GM23248 (cell line): ENCODE measurements at regions of chr7 and their contacts with region 1.

Region 1: GRCh38 chr7:139482662-139483469 is 607 bp downstream of the KLRG2 start:
- DNase-seq: peak; percentile 57
- H3K4me3 ChIP-seq: peak overlapping the region; percentile 51
- H3K27ac ChIP-seq: no peak overlapping the region
- H3K4me1 ChIP-seq: peaks cover 11% of the 10 kb centered on the region
- H3K27me3 ChIP-seq: peaks cover 49% of the 10 kb centered on the region

Region 2: DNA sequence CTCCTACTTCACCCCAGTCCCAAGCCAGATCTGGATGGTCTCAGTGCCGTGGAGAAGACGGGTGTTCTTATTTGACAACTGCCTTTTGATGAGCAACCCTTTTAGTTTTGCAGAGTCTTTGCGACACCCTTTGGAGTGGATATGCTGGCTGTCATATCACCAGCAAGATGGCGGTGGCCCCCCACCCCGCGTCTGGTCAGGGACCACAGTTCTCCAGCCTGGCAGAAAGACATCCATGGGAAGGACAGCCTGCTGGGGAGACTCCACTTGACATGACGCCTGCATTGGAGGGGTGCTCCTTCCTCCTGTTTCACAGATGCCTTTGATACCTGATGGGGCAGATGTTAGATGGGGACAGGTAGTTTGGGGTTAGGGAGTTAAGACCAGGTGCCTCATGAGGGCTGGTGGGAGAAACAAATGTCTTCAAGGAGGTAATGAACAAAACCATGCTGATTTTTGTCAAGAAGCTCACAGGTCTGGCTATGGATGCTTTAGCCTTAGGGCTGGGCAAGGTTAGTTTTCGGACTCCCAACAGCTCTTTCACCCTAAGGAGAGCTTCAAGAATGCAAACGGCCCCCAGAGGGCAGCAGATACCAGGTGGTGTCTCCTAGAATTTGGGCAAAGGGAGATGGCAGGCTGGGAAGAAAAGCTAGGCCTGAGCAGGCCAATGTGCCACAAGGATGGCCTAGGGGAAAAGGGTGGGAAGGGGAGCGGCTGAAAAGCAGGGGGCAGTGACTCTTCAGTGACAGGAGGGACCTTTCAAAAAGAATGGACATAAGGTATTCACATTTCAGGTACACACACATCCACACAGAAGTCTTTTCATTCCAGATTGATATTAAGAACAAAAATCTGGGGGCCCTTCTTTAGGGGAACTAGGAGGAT is 135.9 kb after region 1 on chr7:
- in situ Hi-C with region 1: no loop called
- DNase-seq: peak; percentile 72
- H3K4me3 ChIP-seq: no peak overlapping the region
- H3K27ac ChIP-seq: peak overlapping the region; percentile 54
- H3K4me1 ChIP-seq: peaks cover 9% of the 10 kb centered on the region
- H3K27me3 ChIP-seq: no peaks in the 10 kb centered on the region

Region 3: GRCh38 chr7:139842401-139843210 is 359.7 kb after region 1 on chr7:
- in situ Hi-C with region 1: no loop called
- DNase-seq: no peak
- H3K4me3 ChIP-seq: no peak overlapping the region
- H3K27ac ChIP-seq: no peak overlapping the region
- H3K4me1 ChIP-seq: no peaks in the 10 kb centered on the region
- H3K27me3 ChIP-seq: peaks cover 3% of the 10 kb centered on the region; the same call in 1 of the 2 replicates

Region 4: GRCh38 chr7:140003913-140004382 is 521.1 kb after region 1 on chr7:
- in situ Hi-C with region 1: loop called (anchors 25 kb)
- DNase-seq: peak; percentile 82
- H3K4me3 ChIP-seq: no peak overlapping the region
- H3K27ac ChIP-seq: no peak overlapping the region
- H3K4me1 ChIP-seq: no peaks in the 10 kb centered on the region
- H3K27me3 ChIP-seq: no peaks in the 10 kb centered on the region